ENCODE measurements at regions of chr1 and their contacts with region 1.

Region 1: GRCh38 chr1:116514708-116515525 is 55.9 kb downstream of the CD58 start:
- DNase-seq: peak; percentile 88
- H3K4me3 Mint-ChIP-seq: peak overlapping the region; percentile 55
- H3K27ac Mint-ChIP-seq: peak overlapping the region; percentile 96
- H3K4me1 Mint-ChIP-seq: peaks cover 63% of the 10 kb centered on the region
- H3K27me3 Mint-ChIP-seq: no peaks in the 10 kb centered on the region

Region 2: GRCh38 chr1:116498789-116499628 is 15.9 kb before region 1 on chr1:
- CTCF ChIA-PET with region 1: interaction called, 19 read pairs
- POLR2A ChIA-PET with region 1: interaction called, 26 read pairs
- intact Hi-C with region 1: loop called (anchors 1 kb)
- DNase-seq: peak; percentile 53
- H3K4me3 Mint-ChIP-seq: no peak overlapping the region
- H3K27ac Mint-ChIP-seq: no peak overlapping the region
- H3K4me1 Mint-ChIP-seq: peaks cover 27% of the 10 kb centered on the region
- H3K27me3 Mint-ChIP-seq: no peaks in the 10 kb centered on the region

Region 3: DNA sequence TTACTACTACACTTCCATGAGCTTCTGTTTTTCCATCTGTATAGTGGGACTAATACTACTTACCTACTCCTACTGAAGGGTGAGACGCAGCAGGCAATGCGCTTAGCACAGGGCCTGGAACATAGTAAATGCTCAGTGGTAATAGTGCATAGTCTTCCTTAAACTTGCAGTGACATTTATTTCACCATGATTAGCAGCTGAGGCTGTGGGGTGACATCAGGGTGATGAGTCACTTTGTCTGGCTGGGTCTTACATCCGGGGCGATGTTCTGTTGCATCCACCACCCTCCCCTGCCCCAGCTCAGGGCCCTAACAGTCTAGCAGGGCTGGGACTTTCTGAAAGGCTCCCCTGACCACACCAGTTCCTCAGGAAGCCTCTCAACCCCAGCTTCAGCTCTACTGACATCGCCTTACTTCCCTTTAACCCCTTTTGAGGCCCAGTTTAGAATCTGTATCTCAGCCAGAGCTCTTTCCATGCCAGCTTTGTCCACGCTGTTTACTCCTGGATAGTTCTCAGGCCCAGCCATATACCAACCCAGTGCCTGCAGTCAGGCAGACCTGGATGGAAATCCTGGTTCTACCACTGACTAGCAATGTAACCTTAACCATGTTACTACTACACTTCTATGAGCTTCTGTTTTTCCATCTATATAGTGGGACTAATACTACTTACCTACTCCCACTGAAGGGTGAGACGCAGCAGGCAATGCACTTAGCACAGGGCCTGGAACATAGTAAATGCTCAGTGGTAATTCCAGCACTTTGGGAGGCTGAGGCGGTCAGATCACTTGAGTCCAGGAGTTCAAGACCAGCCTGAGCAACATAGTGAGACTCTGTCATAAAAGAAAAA is 10.4 kb before region 1 on chr1:
- CTCF ChIA-PET with region 1: interaction called, 19 read pairs
- POLR2A ChIA-PET with region 1: interaction called, 26 read pairs
- intact Hi-C with region 1: loop called (anchors 1 kb)
- DNase-seq: peak; percentile 92
- H3K4me3 Mint-ChIP-seq: peak overlapping the region; percentile 38
- H3K27ac Mint-ChIP-seq: peak overlapping the region; percentile 97
- H3K4me1 Mint-ChIP-seq: peaks cover 65% of the 10 kb centered on the region
- H3K27me3 Mint-ChIP-seq: no peaks in the 10 kb centered on the region

Region 4: DNA sequence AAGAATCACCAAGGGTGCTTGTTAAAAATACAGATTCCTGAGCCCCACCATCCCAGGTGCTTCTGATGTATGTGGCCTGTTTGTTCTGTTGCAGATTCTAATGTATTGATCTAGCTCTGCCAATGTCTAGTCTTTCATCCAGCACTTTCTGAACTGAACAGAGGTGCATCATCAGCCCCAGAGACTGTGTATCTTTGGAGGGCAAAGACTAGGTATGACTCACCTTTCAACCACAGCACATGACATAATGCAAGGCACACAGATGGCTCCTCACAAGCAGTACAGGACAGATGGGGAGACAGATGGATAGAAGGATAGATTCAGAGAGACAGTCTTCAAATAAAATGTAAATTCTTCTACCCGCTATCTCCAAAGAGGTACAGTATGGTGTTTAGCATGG is 23.6 kb after region 1 on chr1:
- CTCF ChIA-PET with region 1: interaction called, 3 read pairs
- POLR2A ChIA-PET with region 1: interaction called, 14 read pairs
- intact Hi-C with region 1: loop called (anchors 1 kb)
- DNase-seq: peak; percentile 68
- H3K4me3 Mint-ChIP-seq: no peak overlapping the region
- H3K27ac Mint-ChIP-seq: peak overlapping the region; percentile 59
- H3K4me1 Mint-ChIP-seq: peaks cover 62% of the 10 kb centered on the region
- H3K27me3 Mint-ChIP-seq: no peaks in the 10 kb centered on the region

Region 5: DNA sequence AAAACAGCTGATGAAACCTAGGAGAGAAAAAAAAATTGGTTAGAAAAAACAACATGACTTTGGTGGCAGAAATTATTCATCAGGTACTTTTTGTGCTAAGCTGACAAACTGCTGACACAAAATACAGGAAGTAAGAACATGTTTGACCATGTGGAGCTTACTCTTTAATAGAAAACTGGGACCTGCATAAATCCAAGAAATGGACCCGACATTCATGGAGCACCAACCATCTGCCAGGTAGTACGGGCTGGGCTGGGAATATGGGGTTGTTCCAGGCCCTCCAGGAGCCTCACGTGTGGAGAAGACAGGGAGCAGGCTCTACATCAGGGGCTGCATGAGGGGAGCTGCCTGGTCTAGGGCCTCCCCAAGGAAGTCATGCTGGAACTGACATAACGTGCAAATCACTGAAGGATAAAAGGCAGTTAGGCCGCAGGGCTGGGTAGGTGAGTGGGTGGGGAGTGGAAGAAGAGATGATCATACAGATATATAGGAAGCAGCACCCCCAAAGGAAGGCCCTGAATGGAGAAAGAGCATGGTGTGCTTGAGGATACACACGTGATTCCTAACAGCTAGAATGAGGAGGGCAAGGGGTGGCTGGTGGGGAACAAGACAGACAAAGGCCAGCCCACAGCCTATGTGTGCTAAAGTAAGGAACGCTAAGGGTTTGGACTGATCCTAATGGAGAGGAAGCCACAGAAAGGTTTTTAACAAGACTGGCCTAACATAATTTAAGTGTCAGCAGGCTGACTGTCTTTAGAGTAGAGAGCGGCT is 29.9 kb after region 1 on chr1:
- CTCF ChIA-PET with region 1: interaction called, 3 read pairs
- POLR2A ChIA-PET with region 1: interaction called, 6 read pairs
- intact Hi-C with region 1: loop called (anchors 1 kb)
- DNase-seq: peak; percentile 61
- H3K4me3 Mint-ChIP-seq: peak overlapping the region; percentile 79
- H3K27ac Mint-ChIP-seq: peak overlapping the region; percentile 92
- H3K4me1 Mint-ChIP-seq: peaks cover 76% of the 10 kb centered on the region
- H3K27me3 Mint-ChIP-seq: no peaks in the 10 kb centered on the region

Region 6: DNA sequence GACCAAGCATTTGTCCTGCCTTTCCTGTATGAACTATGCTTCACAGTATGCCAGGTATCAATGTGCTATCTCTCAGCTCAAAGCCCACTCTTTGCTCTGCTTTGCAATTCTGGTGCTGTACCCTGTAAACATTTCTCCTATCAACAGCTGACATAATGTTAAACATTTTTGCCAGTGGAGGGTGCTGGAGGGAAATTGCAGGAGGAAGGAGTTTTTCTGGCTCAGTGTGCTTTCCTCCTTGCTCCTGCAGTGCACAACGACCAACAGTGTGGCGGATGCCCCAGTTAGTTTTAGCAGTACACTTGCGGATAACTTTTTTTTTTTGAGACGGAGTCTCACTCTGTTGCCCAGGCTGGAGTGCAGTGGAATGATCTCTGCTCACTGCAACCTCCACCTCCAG is 327.7 kb after region 1 on chr1:
- CTCF ChIA-PET with region 1: no interaction called
- POLR2A ChIA-PET with region 1: no interaction called
- intact Hi-C with region 1: no loop called
- DNase-seq: no peak
- H3K4me3 Mint-ChIP-seq: no peak overlapping the region
- H3K27ac Mint-ChIP-seq: no peak overlapping the region
- H3K4me1 Mint-ChIP-seq: peaks cover 11% of the 10 kb centered on the region
- H3K27me3 Mint-ChIP-seq: no peaks in the 10 kb centered on the region

Region 7: GRCh38 chr1:117290890-117291289 is 776.0 kb after region 1 on chr1:
- CTCF ChIA-PET with region 1: no interaction called
- POLR2A ChIA-PET with region 1: no interaction called
- intact Hi-C with region 1: no loop called
- DNase-seq: no peak
- H3K4me3 Mint-ChIP-seq: no peak overlapping the region
- H3K27ac Mint-ChIP-seq: no peak overlapping the region
- H3K4me1 Mint-ChIP-seq: no peaks in the 10 kb centered on the region
- H3K27me3 Mint-ChIP-seq: no peaks in the 10 kb centered on the region

Measured in activated CD4-positive, alpha-beta memory T cell treated with anti-CD3 and anti-CD28 coated beads for 36 hours (primary cell).